HCT116 (cell line): ENCODE measurements at regions of chr19 and their contacts with region 1.

Region 1: DNA sequence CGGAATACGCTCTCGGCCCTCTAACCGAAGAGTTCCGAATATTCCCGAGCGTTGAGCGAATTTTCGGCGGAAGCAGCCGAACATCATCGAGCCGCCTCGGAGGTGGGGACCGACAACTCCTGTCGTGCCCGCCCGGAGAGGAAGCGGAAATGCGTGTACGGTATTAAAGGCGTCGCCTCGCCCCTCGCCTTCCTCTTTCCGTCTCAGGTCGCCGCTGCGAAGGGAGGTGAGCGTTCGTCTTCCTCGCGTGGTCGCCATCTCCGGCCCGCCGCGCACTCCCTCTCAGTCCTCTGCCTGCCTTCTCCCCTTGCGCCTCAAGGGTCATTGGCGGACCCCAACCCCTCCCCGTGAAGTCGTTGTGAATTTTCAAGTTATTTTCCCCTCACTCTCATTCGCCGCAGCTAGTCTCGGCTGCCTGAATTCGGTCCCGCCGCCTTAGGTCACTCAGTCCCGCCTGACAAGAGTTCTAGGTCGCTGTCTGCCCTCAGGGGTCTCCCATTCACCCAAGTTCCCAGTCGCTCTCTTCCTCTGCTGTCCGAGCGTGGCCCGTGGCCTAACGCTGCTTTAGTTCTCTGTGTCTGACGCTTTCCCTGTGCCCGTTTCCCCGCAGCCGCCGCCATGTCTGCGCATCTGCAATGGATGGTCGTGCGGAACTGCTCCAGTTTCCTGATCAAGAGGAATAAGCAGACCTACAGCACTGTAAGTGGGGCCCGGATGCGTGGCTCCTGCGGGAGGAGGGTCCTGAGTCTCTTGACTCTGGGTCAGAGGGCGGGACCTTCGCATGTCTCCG is at the start of gene RPL28:
- DNase-seq: peak; percentile 97
- ATAC-seq: peak; percentile 77
- H3K4me3 ChIP-seq: peak within 1 kb of the TSS; percentile 99 to 100
- H3K27ac ChIP-seq: peak within 1 kb of the TSS; percentile 99
- H3K4me1 ChIP-seq: peaks cover 6 to 66% of the 10 kb centered on the region in 2 experiments; a peak in 3 of 4 replicates
- H3K27me3 ChIP-seq: no peaks in the 10 kb centered on the region
- CTCF ChIP-seq: no peak
- POLR2A ChIP-seq: peak; percentile 99
- RAD21 ChIP-seq: no peak
- total RNA-seq, gene RPL28: 3,050 TPM

Region 2: GRCh38 chr19:55312621-55313512 is 73.1 kb before region 1 on chr19:
- CTCF ChIA-PET with region 1: no interaction called
- POLR2A ChIA-PET with region 1: no interaction called
- RAD21 ChIA-PET with region 1: interaction called in 1 of 2 experiments, 11 read pairs
- intact Hi-C with region 1: no loop called
- DNase-seq: no peak
- ATAC-seq: peak; percentile 29; the same call in 1 of the 2 replicates
- H3K4me3 ChIP-seq: no peak overlapping the region
- H3K27ac ChIP-seq: no peak overlapping the region
- H3K4me1 ChIP-seq: no peaks in the 10 kb centered on the region
- H3K27me3 ChIP-seq: no peaks in the 10 kb centered on the region
- CTCF ChIP-seq: no peak
- POLR2A ChIP-seq: no peak
- RAD21 ChIP-seq: no peak

Region 3: GRCh38 chr19:55339048-55339888 is 46.7 kb before region 1 on chr19 and contains the start of gene KMT5C:
- CTCF ChIA-PET with region 1: no interaction called
- POLR2A ChIA-PET with region 1: interaction called, 12 read pairs
- RAD21 ChIA-PET with region 1: interaction called in 1 of 2 experiments, 4 read pairs
- intact Hi-C with region 1: loop called (anchors 2 kb)
- DNase-seq: peak; percentile 100
- ATAC-seq: peak; percentile 85
- H3K4me3 ChIP-seq: peak within 1 kb of the TSS; percentile 74 to 83
- H3K27ac ChIP-seq: peak within 1 kb of the TSS; percentile 92
- H3K4me1 ChIP-seq: peaks cover 9 to 33% of the 10 kb centered on the region in 2 experiments
- H3K27me3 ChIP-seq: no peaks in the 10 kb centered on the region
- CTCF ChIP-seq: 0 out of 6 replicates have a peak, but pooled peaks of 1 of the 3 experiments have one; percentile 17
- POLR2A ChIP-seq: peak; percentile 31
- RAD21 ChIP-seq: no peak
- total RNA-seq, gene KMT5C: 27.5 TPM

Region 4: DNA sequence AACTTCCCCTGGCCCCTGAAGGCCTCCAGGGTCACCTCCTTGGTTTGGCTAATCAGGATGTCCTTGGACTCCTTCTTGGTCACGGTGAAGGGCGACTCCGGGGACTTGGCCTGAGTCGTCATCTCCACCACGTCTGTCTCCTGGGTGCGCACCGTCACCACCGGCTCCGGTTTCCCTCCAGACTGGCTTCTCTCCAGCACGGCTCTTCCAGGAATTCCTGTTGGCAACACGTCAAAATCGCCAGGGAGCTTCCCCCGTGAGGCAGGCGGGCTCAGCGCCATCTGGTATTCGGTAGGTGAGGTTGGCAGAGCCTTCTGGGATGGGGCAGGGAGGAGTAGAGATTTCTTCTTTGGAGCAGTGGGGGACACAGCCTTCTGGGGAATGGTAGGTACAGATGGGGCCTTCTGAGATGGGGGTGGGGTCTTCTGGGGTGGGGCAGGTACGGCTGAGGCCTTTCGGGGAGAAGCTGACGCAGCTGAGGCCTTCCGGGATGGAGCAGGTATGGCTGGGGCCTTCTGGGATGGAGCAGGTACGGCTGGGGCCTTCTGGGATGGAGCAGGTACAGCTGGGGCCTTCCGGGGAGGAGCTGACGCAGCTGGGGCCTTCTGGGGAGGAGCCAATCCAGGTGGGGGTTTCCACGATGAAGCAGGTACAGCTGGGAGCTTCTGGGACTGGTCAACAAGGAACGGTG is 26.8 kb before region 1 on chr19:
- CTCF ChIA-PET with region 1: no interaction called
- POLR2A ChIA-PET with region 1: no interaction called
- RAD21 ChIA-PET with region 1: no interaction called
- intact Hi-C with region 1: no loop called
- DNase-seq: no peak
- ATAC-seq: no peak
- H3K4me3 ChIP-seq: no peak overlapping the region
- H3K27ac ChIP-seq: no peak overlapping the region
- H3K4me1 ChIP-seq: peaks cover 2 to 6% of the 10 kb centered on the region in 2 experiments; a peak in 3 of 4 replicates
- H3K27me3 ChIP-seq: no peaks in the 10 kb centered on the region
- CTCF ChIP-seq: no peak
- POLR2A ChIP-seq: no peak
- RAD21 ChIP-seq: no peak

Region 5: GRCh38 chr19:55407800-55408532 is 22.0 kb after region 1 on chr19:
- CTCF ChIA-PET with region 1: no interaction called
- POLR2A ChIA-PET with region 1: interaction called, 13 read pairs
- RAD21 ChIA-PET with region 1: no interaction called
- intact Hi-C with region 1: no loop called
- DNase-seq: peak; percentile 98
- ATAC-seq: peak; percentile 94
- H3K4me3 ChIP-seq: peak overlapping the region; percentile 81 to 93
- H3K27ac ChIP-seq: peak overlapping the region; percentile 95
- H3K4me1 ChIP-seq: peaks cover 12 to 27% of the 10 kb centered on the region in 2 experiments
- H3K27me3 ChIP-seq: no peaks in the 10 kb centered on the region
- CTCF ChIP-seq: no peak
- POLR2A ChIP-seq: no peak
- RAD21 ChIP-seq: no peak